Heart left ventricle (tissue), 16 donors: ENCODE measurements at regions of chr11 and their contacts with region 1.

Region 1: GRCh38 chr11:118928108-118928870 is 2.6 kb upstream of the BCL9L start:
- DNase-seq: peak; percentile 91 to 93 (median 92)
- ATAC-seq: peak; percentile 73 to 80 (median 75)
- H3K4me3 ChIP-seq: peak overlapping the region; percentile 45 to 95 (median 80)
- H3K27ac ChIP-seq: peak overlapping the region; percentile 92 to 100 (median 98)
- H3K4me1 ChIP-seq: peaks cover 3 to 50% (median 32%) of the 10 kb centered on the region in 12 donors
- H3K27me3 ChIP-seq: no peaks in the 10 kb centered on the region
- CTCF ChIP-seq: peak; percentile 84 to 97 (median 94)
- POLR2A ChIP-seq: no peak

Region 2: GRCh38 chr11:118689851-118690552 is 238.3 kb before region 1 on chr11:
- intact Hi-C with region 1: loop called in 2 of 10 experiments (anchors 2 to 10 kb)
- DNase-seq: peak; percentile 88 to 97 (median 95)
- ATAC-seq: peak; percentile 95 to 97 (median 96)
- H3K4me3 ChIP-seq: peak overlapping the region in 11 of 12 donors; percentile 28 to 56 (median 51)
- H3K27ac ChIP-seq: peak overlapping the region in 11 of 12 donors; percentile 54 to 82 (median 74)
- H3K4me1 ChIP-seq: peaks cover 0 to 30% (median 8%) of the 10 kb centered on the region in 12 donors
- H3K27me3 ChIP-seq: no peaks in the 10 kb centered on the region
- CTCF ChIP-seq: peak; percentile 65 to 91 (median 86)
- POLR2A ChIP-seq: no peak

Region 3: GRCh38 chr11:118791111-118791965 is 137.0 kb before region 1 on chr11 and contains the start of gene DDX6:
- intact Hi-C with region 1: loop called in 7 of 10 experiments (anchors 2 to 5 kb)
- DNase-seq: peak; percentile 92 to 97 (median 94)
- ATAC-seq: peak; percentile 70 to 89 (median 85)
- H3K4me3 ChIP-seq: peak within 1 kb of the TSS; percentile 66 to 98 (median 78)
- H3K27ac ChIP-seq: peak within 1 kb of the TSS; percentile 92 to 100 (median 99)
- H3K4me1 ChIP-seq: peaks cover 0 to 48% (median 36%) of the 10 kb centered on the region in 12 donors
- H3K27me3 ChIP-seq: no peaks in the 10 kb centered on the region
- CTCF ChIP-seq: peak in 10 of 12 donors; percentile 10 to 54 (median 38)
- POLR2A ChIP-seq: peak; percentile 39 to 87
- total RNA-seq, gene DDX6: 83.7 to 166 (median 114) TPM

Region 4: GRCh38 chr11:118870396-118871345 is 57.6 kb before region 1 on chr11:
- intact Hi-C with region 1: loop called in 1 of 10 experiments (anchors 2 kb)
- DNase-seq: peak in 4 of 5 donors; percentile 35 to 72 (median 61)
- ATAC-seq: peak; percentile 79 to 88 (median 81)
- H3K4me3 ChIP-seq: peak overlapping the region in 8 of 12 donors; percentile 18 to 46 (median 34)
- H3K27ac ChIP-seq: peak overlapping the region; percentile 41 to 89 (median 71)
- H3K4me1 ChIP-seq: peaks cover 0 to 20% (median 12%) of the 10 kb centered on the region in 12 donors
- H3K27me3 ChIP-seq: no peaks in the 10 kb centered on the region
- CTCF ChIP-seq: peak in 6 of 12 donors; percentile 4 to 34 (median 18)
- POLR2A ChIP-seq: no peak

Region 5: DNA sequence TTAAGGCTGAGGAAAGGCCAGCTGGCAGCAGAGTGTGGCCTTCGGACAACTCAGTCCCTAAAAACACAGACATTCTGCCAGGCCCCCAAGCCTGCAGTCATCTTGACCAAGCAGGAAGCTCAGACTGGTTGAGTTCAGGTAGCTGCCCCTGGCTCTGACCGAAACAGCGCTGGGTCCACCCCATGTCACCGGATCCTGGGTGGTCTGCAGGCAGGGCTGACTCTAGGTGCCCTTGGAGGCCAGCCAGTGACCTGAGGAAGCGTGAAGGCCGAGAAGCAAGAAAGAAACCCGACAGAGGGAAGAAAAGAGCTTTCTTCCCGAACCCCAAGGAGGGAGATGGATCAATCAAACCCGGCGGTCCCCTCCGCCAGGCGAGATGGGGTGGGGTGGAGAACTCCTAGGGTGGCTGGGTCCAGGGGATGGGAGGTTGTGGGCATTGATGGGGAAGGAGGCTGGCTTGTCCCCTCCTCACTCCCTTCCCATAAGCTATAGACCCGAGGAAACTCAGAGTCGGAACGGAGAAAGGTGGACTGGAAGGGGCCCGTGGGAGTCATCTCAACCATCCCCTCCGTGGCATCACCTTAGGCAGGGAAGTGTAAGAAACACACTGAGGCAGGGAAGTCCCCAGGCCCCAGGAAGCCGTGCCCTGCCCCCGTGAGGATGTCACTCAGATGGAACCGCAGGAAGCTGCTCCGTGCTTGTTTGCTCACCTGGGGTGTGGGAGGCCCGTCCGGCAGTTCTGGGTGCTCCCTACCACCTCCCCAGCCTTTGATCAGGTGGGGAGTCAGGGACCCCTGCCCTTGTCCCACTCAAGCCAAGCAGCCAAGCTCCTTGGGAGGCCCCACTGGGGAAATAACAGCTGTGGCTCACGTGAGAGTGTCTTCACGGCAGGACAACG is 32.9 kb before region 1 on chr11:
- intact Hi-C with region 1: loop called in 1 of 10 experiments (anchors 5 kb)
- DNase-seq: peak in 2 of 5 donors; percentile 26 to 56
- ATAC-seq: no peak
- H3K4me3 ChIP-seq: no peak overlapping the region
- H3K27ac ChIP-seq: peak overlapping the region in 2 of 12 donors; percentile 37 to 43
- H3K4me1 ChIP-seq: peaks cover 0 to 21% (median 0%) of the 10 kb centered on the region in 12 donors
- H3K27me3 ChIP-seq: no peaks in the 10 kb centered on the region
- CTCF ChIP-seq: no peak
- POLR2A ChIP-seq: no peak

Region 6: GRCh38 chr11:119015054-119015611 is 86.8 kb after region 1 on chr11:
- intact Hi-C with region 1: no loop called
- DNase-seq: no peak
- ATAC-seq: no peak
- H3K4me3 ChIP-seq: no peak overlapping the region
- H3K27ac ChIP-seq: no peak overlapping the region
- H3K4me1 ChIP-seq: peaks cover 7 to 36% (median 26%) of the 10 kb centered on the region in 12 donors
- H3K27me3 ChIP-seq: no peaks in the 10 kb centered on the region
- CTCF ChIP-seq: peak in 1 of 12 donors; percentile 19
- POLR2A ChIP-seq: no peak